Activated CD4-positive, alpha-beta T cell treated with anti-CD3 and anti-CD28 coated beads for 36 hours (primary cell): ENCODE measurements at regions of chr19 and their contacts with region 1.

Region 1: DNA sequence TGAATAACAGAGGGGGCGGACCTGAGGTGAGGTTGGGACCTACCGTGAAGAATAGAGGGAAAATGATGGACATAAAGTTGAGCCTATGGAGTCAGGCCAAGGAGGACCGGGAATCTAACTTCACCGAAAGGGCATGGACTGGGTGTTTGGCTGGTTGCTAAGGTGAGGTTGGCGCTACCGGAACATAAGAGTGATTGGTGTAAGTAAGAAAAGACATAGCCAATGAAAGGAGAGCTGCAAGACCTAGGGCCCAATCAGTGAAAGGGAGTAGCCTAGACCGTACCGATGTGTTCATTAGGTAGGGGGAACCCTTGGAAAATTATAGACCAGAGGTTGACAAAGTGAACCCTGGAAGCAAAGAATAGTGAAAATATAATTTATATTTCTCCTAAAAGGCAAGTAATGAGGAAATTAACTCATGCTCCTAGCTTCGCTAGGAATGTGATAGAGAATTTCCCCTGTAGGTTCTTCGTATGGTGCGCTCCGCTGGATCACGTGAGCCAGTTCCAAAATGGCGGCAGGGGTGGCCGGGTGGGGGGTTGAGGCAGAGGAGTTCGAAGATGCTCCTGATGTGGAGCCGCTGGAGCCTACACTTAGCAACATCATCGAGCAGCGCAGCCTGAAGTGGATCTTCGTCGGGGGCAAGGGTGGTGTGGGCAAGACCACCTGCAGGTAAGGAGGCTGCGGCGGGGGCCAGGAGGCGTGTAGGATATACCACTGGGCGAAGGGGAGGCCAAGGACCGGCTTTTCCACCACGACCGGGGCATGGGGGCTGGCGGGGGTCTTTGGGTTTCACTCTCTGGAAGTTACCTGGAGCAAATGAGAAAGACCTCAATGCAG is at the start of gene GET3:
- DNase-seq: peak; percentile 89
- ATAC-seq: peak; percentile 88
- H3K4me3 Mint-ChIP-seq: peak within 1 kb of the TSS; percentile 98
- H3K27ac Mint-ChIP-seq: peak within 1 kb of the TSS; percentile 94
- H3K4me1 Mint-ChIP-seq: peaks cover 32% of the 10 kb centered on the region
- H3K27me3 Mint-ChIP-seq: no peaks in the 10 kb centered on the region
- total RNA-seq, gene GET3: 53.7 to 61.9 TPM

Region 2: DNA sequence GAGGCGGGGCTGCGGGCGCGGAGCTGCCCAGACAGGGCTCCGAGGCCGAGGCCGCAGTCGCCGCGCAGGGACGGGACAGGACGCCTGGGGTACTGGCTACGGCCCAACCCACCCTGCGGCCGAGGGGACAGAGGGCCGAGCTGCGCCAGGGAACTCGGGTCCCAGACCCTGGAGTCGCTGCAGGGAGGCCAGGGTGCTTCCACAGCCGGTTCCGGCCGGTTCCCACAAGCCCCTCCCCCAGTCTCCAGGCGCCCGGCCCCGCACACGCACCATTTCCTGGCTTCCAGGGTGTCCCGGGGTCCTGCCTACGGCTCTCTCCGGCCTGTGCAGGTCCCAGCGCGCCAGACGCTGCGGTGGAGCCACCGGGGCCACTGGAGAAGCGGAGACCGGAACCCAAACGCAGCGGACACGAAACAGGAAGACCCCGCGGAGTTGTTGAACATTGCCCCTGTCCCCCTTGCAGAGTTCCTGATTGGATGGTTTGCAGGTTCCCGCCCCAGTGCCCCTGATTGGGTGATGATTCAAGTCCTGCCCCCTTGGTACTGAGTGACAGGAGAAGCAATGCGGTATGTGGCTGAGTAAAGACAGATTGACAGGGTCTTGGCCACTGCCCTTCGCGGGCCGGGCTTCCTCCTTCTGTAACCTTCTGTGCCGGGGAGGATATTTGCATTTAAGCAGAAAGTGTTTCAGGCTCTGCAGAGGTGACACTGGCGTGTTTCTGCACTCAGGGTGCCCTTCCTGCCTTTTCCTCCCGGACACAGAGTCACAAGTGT is 186.0 kb before region 1 on chr19 and contains the start of gene ZNF564:
- CTCF ChIA-PET with region 1: no interaction called
- POLR2A ChIA-PET with region 1: no interaction called
- intact Hi-C with region 1: loop called in 1 of 2 experiments (anchors 1 kb)
- DNase-seq: peak; percentile 94
- ATAC-seq: peak; percentile 99
- H3K4me3 Mint-ChIP-seq: peak within 1 kb of the TSS; percentile 98
- H3K27ac Mint-ChIP-seq: peak within 1 kb of the TSS; percentile 97
- H3K4me1 Mint-ChIP-seq: peaks cover 40% of the 10 kb centered on the region
- H3K27me3 Mint-ChIP-seq: no peaks in the 10 kb centered on the region
- total RNA-seq, gene ZNF564: 5.2 to 5.6 TPM

Region 3: DNA sequence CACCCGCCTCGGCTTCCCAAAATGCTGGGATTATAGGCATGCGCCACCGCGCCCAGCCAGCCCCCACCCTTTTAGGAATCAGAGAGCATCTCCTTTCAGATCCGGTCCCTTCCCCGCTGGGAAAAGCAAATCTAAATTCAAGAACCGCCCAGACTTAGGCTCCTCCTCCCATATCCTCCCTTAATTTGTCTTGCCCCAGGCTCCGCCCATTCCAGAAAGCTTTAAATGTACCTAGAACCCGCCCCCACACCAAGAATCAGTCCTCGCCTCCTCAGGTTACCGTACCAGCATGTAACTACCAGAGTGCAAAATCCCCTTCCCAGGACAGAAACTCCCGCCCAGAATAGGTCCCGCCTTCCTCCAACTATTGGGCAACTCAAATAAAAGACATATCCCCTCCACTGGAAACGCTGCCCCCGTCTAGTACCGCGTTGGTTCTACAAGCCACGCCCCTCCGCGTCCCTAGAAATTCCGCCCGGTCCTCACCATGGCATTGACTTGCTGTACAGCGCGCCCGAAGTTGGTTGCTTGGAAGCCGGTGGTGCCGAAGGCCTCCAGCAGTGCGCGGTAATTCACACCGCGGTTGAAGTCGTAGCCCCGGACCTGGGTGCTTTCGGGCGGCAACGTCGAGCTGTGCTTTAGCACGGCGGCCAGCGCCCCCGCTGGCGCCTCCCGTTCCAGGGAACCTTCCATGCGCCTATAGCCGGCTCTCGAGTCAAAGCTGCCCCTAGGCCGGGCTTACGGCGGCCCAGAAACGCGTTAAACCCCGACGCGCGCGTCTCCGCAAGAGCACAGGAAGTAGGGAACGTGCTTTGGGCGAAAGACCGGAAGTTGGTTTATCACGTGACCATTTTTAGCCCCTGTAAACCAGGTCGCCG is 55.9 kb before region 1 on chr19 and contains the start of gene DHPS:
- CTCF ChIA-PET with region 1: no interaction called
- POLR2A ChIA-PET with region 1: interaction called, 5 read pairs
- intact Hi-C with region 1: loop called (anchors 1 to 2 kb)
- DNase-seq: peak; percentile 94
- ATAC-seq: peak; percentile 90
- H3K4me3 Mint-ChIP-seq: peak within 1 kb of the TSS; percentile 99
- H3K27ac Mint-ChIP-seq: peak within 1 kb of the TSS; percentile 97
- H3K4me1 Mint-ChIP-seq: peaks cover 23% of the 10 kb centered on the region
- H3K27me3 Mint-ChIP-seq: no peaks in the 10 kb centered on the region
- total RNA-seq, gene DHPS: 101 to 112 TPM

Region 4: GRCh38 chr19:12705654-12706331 is 31.4 kb before region 1 on chr19:
- CTCF ChIA-PET with region 1: no interaction called
- POLR2A ChIA-PET with region 1: no interaction called
- intact Hi-C with region 1: no loop called
- DNase-seq: no peak
- ATAC-seq: no peak
- H3K4me3 Mint-ChIP-seq: no peak overlapping the region
- H3K27ac Mint-ChIP-seq: no peak overlapping the region
- H3K4me1 Mint-ChIP-seq: no peaks in the 10 kb centered on the region
- H3K27me3 Mint-ChIP-seq: no peaks in the 10 kb centered on the region

Region 5: DNA sequence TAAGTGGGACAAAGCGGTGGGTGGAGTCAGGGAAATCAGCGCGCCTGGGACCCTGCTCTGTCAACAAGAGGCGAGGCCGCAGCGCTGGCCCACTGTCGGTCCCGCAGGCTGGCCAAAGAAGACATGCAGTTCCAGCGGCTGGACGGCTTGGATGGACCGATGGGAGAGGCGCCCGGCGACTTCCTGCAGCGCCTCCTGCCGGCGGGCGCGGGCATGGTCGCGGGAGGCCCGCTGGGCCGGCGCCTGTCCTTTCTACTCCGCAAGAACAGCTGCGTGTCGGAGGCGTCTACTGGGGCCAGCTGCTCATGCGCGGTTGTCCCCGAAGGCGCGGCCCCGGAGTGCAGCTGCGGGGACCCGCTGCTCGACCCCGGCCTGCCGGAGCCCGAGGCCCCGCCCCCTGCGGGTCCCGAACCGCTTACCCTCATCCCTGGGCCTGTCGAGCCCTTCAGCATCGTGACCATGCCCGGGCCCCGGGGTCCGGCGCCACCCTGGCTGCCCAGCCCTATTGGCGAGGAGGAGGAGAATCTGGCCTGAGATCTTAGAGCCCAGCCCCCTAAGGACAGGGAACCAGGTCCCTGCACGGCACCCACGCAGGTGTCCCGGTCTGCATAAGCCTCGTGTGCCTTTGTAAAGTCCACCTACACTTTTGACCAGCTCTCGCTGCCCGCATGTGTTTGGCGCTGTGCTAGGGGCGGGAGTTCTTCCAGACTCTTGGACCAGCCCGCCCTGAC is 20.5 kb after region 1 on chr19:
- CTCF ChIA-PET with region 1: interaction called, 20 read pairs
- POLR2A ChIA-PET with region 1: no interaction called
- intact Hi-C with region 1: loop called in 1 of 2 experiments (anchors 1 kb)
- DNase-seq: peak; percentile 83
- ATAC-seq: peak; percentile 84
- H3K4me3 Mint-ChIP-seq: peak overlapping the region; percentile 19
- H3K27ac Mint-ChIP-seq: no peak overlapping the region
- H3K4me1 Mint-ChIP-seq: peaks cover 6% of the 10 kb centered on the region
- H3K27me3 Mint-ChIP-seq: peaks cover 20% of the 10 kb centered on the region

Region 6: GRCh38 chr19:12782229-12783028 is 45.2 kb after region 1 on chr19:
- CTCF ChIA-PET with region 1: interaction called, 4 read pairs
- POLR2A ChIA-PET with region 1: no interaction called
- intact Hi-C with region 1: loop called in 1 of 2 experiments (anchors 2 kb)
- DNase-seq: peak; percentile 95
- ATAC-seq: peak; percentile 40
- H3K4me3 Mint-ChIP-seq: peak overlapping the region; percentile 74
- H3K27ac Mint-ChIP-seq: peak overlapping the region; percentile 98
- H3K4me1 Mint-ChIP-seq: peaks cover 33% of the 10 kb centered on the region
- H3K27me3 Mint-ChIP-seq: no peaks in the 10 kb centered on the region

Region 7: DNA sequence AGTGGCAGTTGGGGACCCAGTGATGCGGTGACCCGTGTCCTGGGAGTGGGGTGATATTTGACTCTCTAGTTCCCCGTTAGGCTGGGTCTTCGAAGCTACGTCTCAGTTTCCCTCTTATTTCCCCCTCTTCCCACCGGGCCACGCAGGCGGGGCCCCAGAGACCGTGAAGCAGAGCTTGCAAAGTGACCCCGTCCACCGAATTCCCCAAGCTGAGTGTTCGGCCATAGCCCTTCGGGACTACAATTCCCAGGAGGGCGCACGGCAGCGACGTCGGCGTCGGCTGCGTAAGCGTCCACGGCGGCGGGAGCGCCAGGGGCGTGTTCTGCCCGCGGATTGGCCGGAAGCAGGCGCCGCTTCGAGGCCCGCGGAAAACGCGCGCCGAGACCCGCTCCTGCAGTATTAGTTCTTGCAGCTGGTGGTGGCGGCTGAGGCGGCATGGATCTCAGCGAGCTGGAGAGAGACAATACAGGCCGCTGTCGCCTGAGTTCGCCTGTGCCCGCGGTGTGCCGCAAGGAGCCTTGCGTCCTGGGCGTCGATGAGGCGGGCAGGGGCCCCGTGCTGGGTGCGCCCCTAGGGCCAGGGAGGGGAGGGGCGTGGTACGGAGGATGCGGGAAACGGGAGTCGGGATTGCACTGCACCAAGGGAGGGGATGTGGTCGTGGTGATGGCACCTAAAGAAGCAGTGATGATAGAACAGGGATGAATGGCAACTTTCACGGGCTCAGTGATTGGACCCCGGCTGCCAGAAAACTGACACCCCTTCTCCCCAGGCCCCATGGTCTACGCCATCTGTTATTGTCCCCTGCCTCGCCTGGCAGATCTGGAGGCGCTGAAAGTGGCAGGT is 69.2 kb after region 1 on chr19 and contains the start of gene RNASEH2A:
- CTCF ChIA-PET with region 1: interaction called, 5 read pairs
- POLR2A ChIA-PET with region 1: interaction called, 3 read pairs
- intact Hi-C with region 1: loop called in 1 of 2 experiments (anchors 1 kb)
- DNase-seq: peak; percentile 94
- ATAC-seq: peak; percentile 93
- H3K4me3 Mint-ChIP-seq: peak within 1 kb of the TSS; percentile 89
- H3K27ac Mint-ChIP-seq: peak within 1 kb of the TSS; percentile 80
- H3K4me1 Mint-ChIP-seq: peaks cover 24% of the 10 kb centered on the region
- H3K27me3 Mint-ChIP-seq: no peaks in the 10 kb centered on the region
- total RNA-seq, gene RNASEH2A: 27.0 to 51.1 TPM

Region 8: DNA sequence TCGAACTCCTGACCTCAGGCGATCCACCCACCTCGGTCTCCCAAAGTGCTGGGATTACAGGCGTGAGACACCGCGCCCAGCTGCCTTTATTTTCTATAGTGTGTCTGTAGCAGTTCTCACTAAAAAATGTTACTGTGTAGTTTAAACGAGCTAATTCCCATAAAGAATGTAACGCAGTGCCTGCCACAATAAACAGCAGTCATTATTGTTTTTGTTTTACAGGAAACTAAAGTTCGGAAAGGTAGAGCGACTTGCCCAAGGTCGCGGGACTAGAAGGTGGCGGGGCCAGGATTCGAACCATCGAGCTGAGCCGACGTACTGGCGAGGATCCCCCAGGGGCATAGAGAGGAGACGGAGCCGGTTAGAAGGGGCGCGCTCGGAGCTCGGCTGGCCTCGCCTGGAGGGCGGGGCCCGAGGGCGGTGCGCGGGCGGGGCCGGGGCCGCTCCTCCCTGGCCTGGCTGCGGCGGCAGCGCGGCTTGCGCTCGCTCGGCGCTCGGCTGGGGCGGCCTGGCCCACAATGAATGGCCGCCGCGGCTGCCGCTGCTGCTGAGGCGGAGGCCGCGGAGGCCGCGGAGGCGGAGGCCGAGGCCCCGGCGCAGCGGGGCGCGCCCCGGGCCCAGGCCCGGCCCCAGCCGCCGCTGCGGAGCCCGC is 380.7 kb after region 1 on chr19 and contains the start of gene NACC1:
- CTCF ChIA-PET with region 1: no interaction called
- POLR2A ChIA-PET with region 1: no interaction called
- intact Hi-C with region 1: loop called in 1 of 2 experiments (anchors 1 kb)
- DNase-seq: peak; percentile 95
- ATAC-seq: peak; percentile 85
- H3K4me3 Mint-ChIP-seq: peak within 1 kb of the TSS; percentile 87
- H3K27ac Mint-ChIP-seq: peak within 1 kb of the TSS; percentile 95
- H3K4me1 Mint-ChIP-seq: peaks cover 49% of the 10 kb centered on the region
- H3K27me3 Mint-ChIP-seq: no peaks in the 10 kb centered on the region
- total RNA-seq, gene NACC1: 77.5 to 84.5 TPM

Region 9: GRCh38 chr19:13463296-13463695 is 726.1 kb after region 1 on chr19:
- CTCF ChIA-PET with region 1: no interaction called
- POLR2A ChIA-PET with region 1: no interaction called
- intact Hi-C with region 1: no loop called
- DNase-seq: peak; percentile 47
- ATAC-seq: no peak
- H3K4me3 Mint-ChIP-seq: no peak overlapping the region
- H3K27ac Mint-ChIP-seq: no peak overlapping the region
- H3K4me1 Mint-ChIP-seq: no peaks in the 10 kb centered on the region
- H3K27me3 Mint-ChIP-seq: peaks cover 12% of the 10 kb centered on the region